Mammary epithelial cell (primary cell): ENCODE measurements at regions of chr12 and their contacts with region 1.

Region 1: DNA sequence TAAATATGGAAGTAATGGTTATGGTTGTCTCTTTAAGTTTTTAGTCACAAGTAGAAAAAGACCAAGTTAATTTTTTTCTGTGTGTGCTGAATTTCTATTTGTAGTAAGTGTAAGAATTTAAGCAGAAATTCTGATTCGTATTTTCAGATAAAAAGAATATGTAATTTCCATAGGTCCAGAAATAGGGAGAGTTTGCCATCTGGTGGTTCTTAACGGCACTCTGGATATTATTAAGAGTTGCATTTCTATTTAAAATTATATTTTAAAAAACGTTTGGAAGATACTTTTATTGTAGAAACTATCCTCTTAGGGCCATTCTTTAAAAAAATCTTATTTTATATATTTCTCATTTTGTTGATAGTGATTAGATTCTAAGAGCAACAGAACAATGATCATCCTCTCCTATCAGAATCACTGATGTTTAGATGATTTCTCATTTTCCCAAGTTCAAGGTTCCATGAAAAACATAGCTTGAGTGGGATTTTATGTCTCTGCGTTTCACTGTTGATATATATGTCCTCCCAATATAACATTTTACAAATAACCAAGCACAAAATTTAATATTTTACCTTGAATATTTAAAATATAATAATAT is 88.3 kb downstream of the LRRK2 start:
- DNase-seq: no peak
- H3K4me3 ChIP-seq: no peak overlapping the region
- H3K27ac ChIP-seq: no peak overlapping the region
- H3K4me1 ChIP-seq: peaks cover 10% of the 10 kb centered on the region
- H3K27me3 ChIP-seq: no peaks in the 10 kb centered on the region
- CTCF ChIP-seq: peak; percentile 64 to 66

Region 2: DNA sequence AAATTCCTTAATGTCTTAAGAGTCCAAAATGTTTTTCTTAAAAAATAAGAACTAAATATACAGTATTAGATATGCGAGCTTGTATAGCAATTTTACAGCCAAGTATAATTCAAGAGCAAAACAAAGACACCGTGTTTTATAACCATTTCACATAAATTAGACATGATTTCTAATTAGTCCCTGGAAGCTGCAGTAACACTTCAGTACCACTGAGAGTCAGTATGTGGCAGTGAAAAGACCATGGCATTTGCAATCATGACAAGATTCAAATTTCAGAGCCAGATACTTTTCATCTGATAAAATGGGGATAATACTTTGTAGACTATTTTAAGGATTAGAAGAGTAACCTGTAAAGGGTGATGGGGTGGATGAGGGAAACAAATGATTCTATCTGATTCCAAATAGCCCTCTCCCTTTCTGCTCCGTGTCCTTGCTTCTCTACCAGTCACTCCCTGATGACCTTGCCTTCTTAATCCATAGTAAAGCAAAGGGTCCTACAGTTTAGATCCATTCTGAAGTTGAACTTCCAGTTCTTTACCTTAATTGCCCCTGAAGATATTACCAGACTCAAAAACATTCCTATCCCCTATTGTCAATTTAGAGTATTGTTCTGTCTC is 548.0 kb before region 1 on chr12:
- CTCF ChIA-PET with region 1: no interaction called
- dilution Hi-C with region 1: no loop called
- in situ Hi-C with region 1: loop called (anchors 25 kb)
- intact Hi-C with region 1: loop called (anchors 2 kb)
- DNase-seq: peak; percentile 9
- H3K4me3 ChIP-seq: no peak overlapping the region
- H3K27ac ChIP-seq: no peak overlapping the region
- H3K4me1 ChIP-seq: no peaks in the 10 kb centered on the region
- H3K27me3 ChIP-seq: no peaks in the 10 kb centered on the region
- CTCF ChIP-seq: peak; percentile 89 to 95

Region 3: DNA sequence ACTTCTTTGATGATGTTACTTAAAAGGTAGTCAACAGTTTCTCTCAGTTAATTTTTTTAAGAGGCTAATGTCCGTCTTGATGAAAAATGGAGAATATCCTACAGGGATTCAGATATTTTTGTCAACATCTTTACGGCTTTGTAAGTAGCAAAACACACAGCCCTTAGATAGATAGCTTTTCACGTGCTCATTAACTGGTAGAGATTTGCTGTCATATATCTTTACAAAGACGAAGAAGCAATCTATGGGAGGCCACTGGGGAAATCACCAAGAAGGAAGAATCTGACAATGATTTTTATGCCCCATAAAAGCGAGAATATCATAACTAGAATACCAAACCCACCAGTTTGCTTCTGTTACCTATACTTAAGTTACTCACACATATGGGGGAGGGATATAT is 328.4 kb before region 1 on chr12:
- CTCF ChIA-PET with region 1: no interaction called
- dilution Hi-C with region 1: no loop called
- in situ Hi-C with region 1: no loop called
- intact Hi-C with region 1: no loop called
- DNase-seq: no peak
- H3K4me3 ChIP-seq: no peak overlapping the region
- H3K27ac ChIP-seq: no peak overlapping the region
- H3K4me1 ChIP-seq: peaks cover 3% of the 10 kb centered on the region
- H3K27me3 ChIP-seq: no peaks in the 10 kb centered on the region
- CTCF ChIP-seq: no peak

Region 4: GRCh38 chr12:40010899-40011774 is 301.9 kb before region 1 on chr12:
- CTCF ChIA-PET with region 1: no interaction called
- dilution Hi-C with region 1: no loop called
- in situ Hi-C with region 1: loop called (anchors 10 to 25 kb)
- intact Hi-C with region 1: loop called (anchors 1 kb)
- DNase-seq: peak; percentile 64
- H3K4me3 ChIP-seq: no peak overlapping the region
- H3K27ac ChIP-seq: no peak overlapping the region
- H3K4me1 ChIP-seq: peaks cover 6% of the 10 kb centered on the region
- H3K27me3 ChIP-seq: no peaks in the 10 kb centered on the region
- CTCF ChIP-seq: peak; percentile 74 to 86

Region 5: GRCh38 chr12:40152783-40153383 is 160.2 kb before region 1 on chr12:
- CTCF ChIA-PET with region 1: no interaction called
- dilution Hi-C with region 1: no loop called
- in situ Hi-C with region 1: loop called (anchors 5 kb)
- intact Hi-C with region 1: loop called (anchors 1 kb)
- DNase-seq: peak; percentile 41
- H3K4me3 ChIP-seq: no peak overlapping the region
- H3K27ac ChIP-seq: no peak overlapping the region
- H3K4me1 ChIP-seq: peaks cover 13% of the 10 kb centered on the region
- H3K27me3 ChIP-seq: no peaks in the 10 kb centered on the region
- CTCF ChIP-seq: peak; percentile 80 to 87

Region 6: DNA sequence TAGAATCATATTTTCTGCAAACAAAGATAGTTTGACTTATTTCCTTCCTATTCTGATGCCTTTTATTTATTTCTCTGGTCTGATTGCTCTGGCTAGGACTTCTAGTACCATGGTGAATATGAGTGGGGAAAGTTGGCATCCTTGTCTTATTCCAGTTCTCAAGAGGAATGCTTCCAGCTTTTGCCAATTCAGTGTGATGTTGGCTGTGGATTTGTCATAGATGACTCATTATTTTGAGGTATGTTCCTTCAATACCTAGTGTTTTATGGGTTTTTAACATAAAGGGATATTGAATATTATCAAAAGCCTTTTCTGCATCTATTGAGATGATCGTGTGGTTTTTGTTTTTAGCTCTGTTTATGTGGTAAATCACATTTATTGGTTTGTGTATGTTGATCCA is 239.8 kb after region 1 on chr12:
- CTCF ChIA-PET with region 1: no interaction called
- dilution Hi-C with region 1: no loop called
- in situ Hi-C with region 1: no loop called
- intact Hi-C with region 1: no loop called
- DNase-seq: peak; percentile 77
- H3K4me3 ChIP-seq: no peak overlapping the region
- H3K27ac ChIP-seq: no peak overlapping the region
- H3K4me1 ChIP-seq: peaks cover 12% of the 10 kb centered on the region
- H3K27me3 ChIP-seq: no peaks in the 10 kb centered on the region
- CTCF ChIP-seq: no peak

Region 7: DNA sequence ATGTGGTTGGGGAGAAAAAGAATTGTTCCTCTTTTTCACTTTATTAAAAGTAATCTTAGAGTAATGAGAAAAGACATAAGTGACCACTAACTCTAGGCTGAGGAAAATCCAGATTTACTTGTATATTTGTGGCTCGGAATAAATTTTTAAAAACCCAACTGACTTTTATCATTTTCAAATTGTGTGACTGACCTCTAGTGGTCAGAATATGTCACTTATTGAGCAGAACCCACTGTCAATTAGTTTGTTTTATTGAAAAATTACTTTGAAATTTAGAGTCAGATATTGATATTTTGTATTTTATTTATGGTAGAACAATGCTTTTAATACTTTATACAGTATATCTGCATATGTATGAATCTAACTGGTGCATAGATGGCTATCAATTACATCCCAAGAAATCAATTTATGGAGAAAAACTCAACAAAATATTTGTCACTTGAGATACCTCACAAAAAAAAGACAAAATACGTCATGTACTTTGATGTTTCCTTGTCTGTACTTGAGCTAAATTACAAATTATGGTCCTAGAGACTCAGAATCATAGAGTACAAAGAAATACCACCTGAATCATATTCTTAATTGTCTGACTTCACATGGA is 608.6 kb after region 1 on chr12:
- CTCF ChIA-PET with region 1: no interaction called
- dilution Hi-C with region 1: no loop called
- in situ Hi-C with region 1: loop called in 1 of 2 experiments (anchors 25 kb)
- intact Hi-C with region 1: no loop called
- DNase-seq: no peak
- H3K4me3 ChIP-seq: no peak overlapping the region
- H3K27ac ChIP-seq: no peak overlapping the region
- H3K4me1 ChIP-seq: no peaks in the 10 kb centered on the region
- H3K27me3 ChIP-seq: no peaks in the 10 kb centered on the region
- CTCF ChIP-seq: peak; percentile 59 to 61

Region 8: DNA sequence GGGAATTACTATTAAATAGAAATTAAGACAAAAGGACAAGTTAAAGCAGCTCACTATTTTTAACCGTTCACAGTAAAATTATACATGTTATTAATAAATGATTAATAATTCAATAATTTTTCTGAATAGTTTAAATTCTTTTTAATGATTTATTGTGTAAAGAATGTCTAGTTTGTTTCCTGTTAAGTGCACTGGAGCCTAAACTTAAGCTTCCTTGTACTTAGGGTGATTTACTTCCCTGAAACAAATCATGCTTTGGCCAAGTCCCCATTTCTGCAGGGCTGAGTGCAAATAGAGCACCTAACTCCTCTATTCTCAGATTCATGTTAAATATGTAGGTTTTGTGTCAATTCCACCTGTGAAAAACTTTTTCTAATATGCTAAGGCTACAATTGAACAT is 686.1 kb after region 1 on chr12:
- CTCF ChIA-PET with region 1: no interaction called
- dilution Hi-C with region 1: no loop called
- in situ Hi-C with region 1: no loop called
- intact Hi-C with region 1: no loop called
- DNase-seq: no peak
- H3K4me3 ChIP-seq: no peak overlapping the region
- H3K27ac ChIP-seq: no peak overlapping the region
- H3K4me1 ChIP-seq: no peaks in the 10 kb centered on the region
- H3K27me3 ChIP-seq: no peaks in the 10 kb centered on the region
- CTCF ChIP-seq: no peak